ENCODE measurements at regions of chr3 and their contacts with region 1.

Region 1: GRCh38 chr3:129490242-129491045 is 38.0 kb upstream of the RHO start:
- DNase-seq: peak; percentile 80 to 84
- H3K4me3 ChIP-seq: no peak overlapping the region
- H3K27ac ChIP-seq: peak overlapping the region; percentile 66
- H3K4me1 ChIP-seq: peaks cover 49% of the 10 kb centered on the region
- H3K27me3 ChIP-seq: no peaks in the 10 kb centered on the region
- CTCF ChIP-seq: peak; percentile 91

Region 2: DNA sequence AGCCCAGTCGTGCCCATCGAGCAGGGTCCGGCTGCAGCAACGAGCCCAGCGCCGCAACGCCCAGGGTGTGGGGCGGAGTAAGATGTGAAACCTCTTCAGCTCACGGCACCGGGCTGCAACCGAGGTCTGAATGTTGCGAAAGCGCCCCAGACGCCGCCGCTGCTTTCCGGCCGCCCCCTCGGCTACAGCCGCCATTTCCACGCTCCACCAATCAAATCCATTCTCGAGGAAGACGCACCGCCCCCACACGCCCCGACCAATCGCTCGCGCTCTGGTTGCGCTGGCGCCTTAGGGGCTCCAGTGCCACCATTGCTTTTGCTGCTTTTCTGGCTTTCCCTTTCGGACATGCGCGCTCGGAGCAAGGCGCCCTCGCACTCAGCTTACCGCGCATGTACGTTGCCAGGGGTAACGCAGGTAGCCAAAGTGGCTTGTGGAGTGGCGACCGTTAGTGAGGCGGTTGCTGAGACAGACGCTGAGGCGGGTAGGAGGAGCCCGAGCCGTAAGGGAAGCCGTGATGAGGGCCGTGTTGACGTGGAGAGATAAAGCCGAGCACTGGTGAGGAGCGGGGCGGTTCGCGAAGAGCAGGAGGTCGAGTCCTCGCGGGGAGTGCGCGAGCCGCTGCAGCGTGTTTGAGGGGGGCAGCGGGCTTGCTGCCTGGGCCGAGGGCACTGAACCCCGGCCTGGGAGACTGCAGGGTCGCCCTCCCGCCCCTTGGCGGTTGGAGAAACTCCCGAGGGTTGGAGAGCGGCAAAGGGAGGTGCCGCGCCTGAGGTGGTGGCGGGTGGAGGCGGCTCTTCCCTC is 50.4 kb before region 1 on chr3 and contains the starts of genes IFT122 and MBD4:
- CTCF ChIA-PET with region 1: no interaction called
- POLR2A ChIA-PET with region 1: interaction called, 4 read pairs
- intact Hi-C with region 1: loop called (anchors 1 kb)
- DNase-seq: peak; percentile 97 to 99
- H3K4me3 ChIP-seq: peak within 1 kb of the TSS; percentile 79
- H3K27ac ChIP-seq: peak within 1 kb of the TSS; percentile 62
- H3K4me1 ChIP-seq: peaks cover 38% of the 10 kb centered on the region
- H3K27me3 ChIP-seq: no peaks in the 10 kb centered on the region
- CTCF ChIP-seq: no peak
- total RNA-seq, gene IFT122: 44.8 and 55.6 TPM in 2 replicates
- total RNA-seq, gene MBD4: 48.6 and 49.4 TPM in 2 replicates

Region 3: DNA sequence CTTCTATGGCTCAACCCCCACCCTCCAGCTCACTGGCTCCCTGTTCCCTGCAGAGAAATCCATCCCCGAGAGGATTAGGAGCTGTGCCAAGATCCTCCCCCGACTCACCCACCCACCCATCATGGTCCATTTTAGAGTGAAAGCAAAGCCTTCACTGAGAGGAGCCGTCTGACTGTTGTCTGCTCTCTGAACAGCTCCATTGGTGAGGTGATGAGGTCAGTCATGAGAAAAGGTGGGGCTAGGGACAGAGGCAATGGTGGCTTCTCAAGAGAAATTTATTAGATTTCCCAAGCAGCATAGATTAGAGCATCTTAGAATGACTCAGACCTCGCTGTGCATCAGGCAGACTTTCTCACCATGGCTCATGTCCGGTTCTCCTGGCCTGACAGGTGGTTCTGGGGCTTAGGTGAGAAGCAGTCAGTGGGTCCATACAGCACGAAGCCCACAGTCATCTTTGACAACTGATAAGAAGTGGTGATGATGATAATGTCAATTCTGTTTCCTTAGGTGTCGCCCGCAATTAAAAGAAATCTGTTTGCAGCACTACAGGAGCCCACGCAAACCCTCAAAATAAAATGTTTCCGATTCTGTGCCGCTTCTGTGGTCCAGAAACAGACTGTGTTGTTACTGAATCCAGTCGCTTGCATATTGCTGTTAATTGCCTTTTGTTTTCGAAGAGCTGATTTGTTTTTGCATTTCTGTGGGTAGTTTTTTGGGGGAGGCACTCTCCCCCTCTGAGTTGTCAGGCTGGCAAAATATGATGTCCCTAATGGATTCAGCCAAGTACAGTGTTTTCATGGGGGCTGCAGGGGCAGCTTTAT is 13.2 kb after region 1 on chr3:
- CTCF ChIA-PET with region 1: no interaction called
- POLR2A ChIA-PET with region 1: no interaction called
- intact Hi-C with region 1: no loop called
- DNase-seq: no peak
- H3K4me3 ChIP-seq: no peak overlapping the region
- H3K27ac ChIP-seq: no peak overlapping the region
- H3K4me1 ChIP-seq: peaks cover 10% of the 10 kb centered on the region
- H3K27me3 ChIP-seq: no peaks in the 10 kb centered on the region
- CTCF ChIP-seq: no peak

Region 4: DNA sequence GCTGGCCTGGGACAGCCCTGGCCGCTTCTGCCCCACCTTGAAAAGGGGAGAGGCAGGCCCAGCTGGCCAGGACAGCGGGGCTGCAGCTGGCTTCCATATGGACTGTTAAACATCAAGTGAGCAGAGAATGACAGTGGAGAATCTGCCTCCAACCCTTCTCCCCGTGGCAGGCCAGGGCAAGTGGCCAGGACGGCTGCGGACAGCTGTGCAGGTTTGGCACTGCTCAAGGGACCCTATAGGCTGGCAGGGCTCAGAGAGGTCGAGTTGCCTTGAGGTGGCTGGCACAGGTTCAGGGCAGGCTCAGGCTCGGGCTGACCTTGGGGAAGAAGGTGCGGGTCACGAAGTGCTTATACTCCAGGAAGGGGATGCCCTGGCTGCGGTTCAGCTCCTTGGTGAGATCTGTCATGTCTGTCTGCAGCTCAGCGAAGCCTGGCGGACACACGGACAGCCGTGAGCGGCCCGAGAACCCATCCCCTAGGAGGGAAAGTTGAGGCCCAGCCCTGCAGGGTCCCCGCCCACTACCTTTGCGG is 76.8 kb after region 1 on chr3:
- CTCF ChIA-PET with region 1: no interaction called
- POLR2A ChIA-PET with region 1: no interaction called
- intact Hi-C with region 1: loop called (anchors 5 kb)
- DNase-seq: no peak
- H3K4me3 ChIP-seq: no peak overlapping the region
- H3K27ac ChIP-seq: no peak overlapping the region
- H3K4me1 ChIP-seq: peaks cover 9% of the 10 kb centered on the region
- H3K27me3 ChIP-seq: no peaks in the 10 kb centered on the region
- CTCF ChIP-seq: no peak

Region 5: DNA sequence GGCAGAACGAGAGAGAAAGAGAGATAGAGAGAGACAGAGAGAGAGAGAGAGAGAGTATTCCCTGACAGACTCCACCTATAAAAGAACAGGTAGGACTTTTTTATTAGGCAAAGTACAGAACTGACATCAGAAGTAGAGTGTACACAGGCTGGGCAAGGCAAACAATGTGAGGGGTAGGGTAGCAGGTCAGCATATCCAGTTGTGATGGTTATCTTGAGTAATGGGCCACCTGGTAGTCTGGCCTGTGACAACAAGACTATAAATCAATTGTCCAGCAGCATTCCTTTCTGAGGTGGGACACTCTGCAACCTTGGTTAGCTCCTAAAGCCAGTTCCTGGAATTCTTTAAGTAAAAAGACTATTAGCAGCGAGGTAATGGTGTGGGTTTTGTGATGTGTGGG is 417.9 kb after region 1 on chr3:
- CTCF ChIA-PET with region 1: no interaction called
- POLR2A ChIA-PET with region 1: interaction called, 35 read pairs
- intact Hi-C with region 1: no loop called
- DNase-seq: peak; percentile 74 to 95
- H3K4me3 ChIP-seq: peak overlapping the region; percentile 38; the same call in 1 of the 2 replicates
- H3K27ac ChIP-seq: peak overlapping the region; percentile 72
- H3K4me1 ChIP-seq: peaks cover 27% of the 10 kb centered on the region
- H3K27me3 ChIP-seq: no peaks in the 10 kb centered on the region
- CTCF ChIP-seq: no peak

Region 6: GRCh38 chr3:129994883-129995559 is 504.6 kb after region 1 on chr3:
- CTCF ChIA-PET with region 1: no interaction called
- POLR2A ChIA-PET with region 1: no interaction called
- intact Hi-C with region 1: loop called (anchors 5 kb)
- DNase-seq: no peak
- H3K4me3 ChIP-seq: no peak overlapping the region
- H3K27ac ChIP-seq: no peak overlapping the region
- H3K4me1 ChIP-seq: no peaks in the 10 kb centered on the region
- H3K27me3 ChIP-seq: no peaks in the 10 kb centered on the region
- CTCF ChIP-seq: no peak

Region 7: DNA sequence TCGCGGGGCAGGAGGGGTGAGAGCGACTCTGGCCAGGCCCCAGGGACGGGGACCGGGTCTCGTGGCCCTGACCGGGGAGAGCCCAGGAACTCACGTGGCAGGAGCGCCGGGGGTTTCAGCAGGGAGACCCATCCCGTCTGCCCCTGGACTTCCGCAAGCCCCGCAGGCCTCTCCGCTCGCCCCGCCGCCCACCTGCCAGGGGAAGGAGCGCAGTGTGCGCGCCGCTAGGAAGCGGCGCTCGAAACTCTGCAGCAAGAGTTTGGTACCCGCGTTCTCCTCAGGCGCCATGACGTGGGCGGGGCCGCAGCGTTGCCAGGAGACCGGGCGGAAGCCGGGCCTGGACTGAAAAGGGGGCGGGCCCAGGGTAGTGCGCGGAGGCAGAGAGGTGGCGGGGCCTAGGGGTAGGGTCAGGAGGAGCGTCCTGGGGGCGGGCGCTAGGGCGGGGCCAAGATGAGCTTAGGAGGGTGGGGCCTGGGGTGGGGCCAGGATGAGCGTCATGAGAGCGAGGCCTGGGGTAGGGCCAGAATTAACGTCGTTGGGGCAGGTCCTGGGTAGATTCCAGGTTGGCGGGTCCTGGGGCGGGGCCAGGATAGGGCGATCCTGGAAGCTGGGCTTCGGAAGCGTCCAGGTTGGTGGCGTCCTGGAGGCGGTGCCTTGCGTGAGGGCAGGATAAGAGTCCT is 620.9 kb after region 1 on chr3:
- CTCF ChIA-PET with region 1: no interaction called
- POLR2A ChIA-PET with region 1: no interaction called
- intact Hi-C with region 1: loop called (anchors 5 kb)
- DNase-seq: peak; percentile 89 to 99
- H3K4me3 ChIP-seq: peak overlapping the region; percentile 88
- H3K27ac ChIP-seq: peak overlapping the region; percentile 78
- H3K4me1 ChIP-seq: peaks cover 23% of the 10 kb centered on the region
- H3K27me3 ChIP-seq: no peaks in the 10 kb centered on the region
- CTCF ChIP-seq: no peak

Measured in PC-9 (cell line).